ENCODE measurements at regions of chr16 and their contacts with region 1.

Region 1: DNA sequence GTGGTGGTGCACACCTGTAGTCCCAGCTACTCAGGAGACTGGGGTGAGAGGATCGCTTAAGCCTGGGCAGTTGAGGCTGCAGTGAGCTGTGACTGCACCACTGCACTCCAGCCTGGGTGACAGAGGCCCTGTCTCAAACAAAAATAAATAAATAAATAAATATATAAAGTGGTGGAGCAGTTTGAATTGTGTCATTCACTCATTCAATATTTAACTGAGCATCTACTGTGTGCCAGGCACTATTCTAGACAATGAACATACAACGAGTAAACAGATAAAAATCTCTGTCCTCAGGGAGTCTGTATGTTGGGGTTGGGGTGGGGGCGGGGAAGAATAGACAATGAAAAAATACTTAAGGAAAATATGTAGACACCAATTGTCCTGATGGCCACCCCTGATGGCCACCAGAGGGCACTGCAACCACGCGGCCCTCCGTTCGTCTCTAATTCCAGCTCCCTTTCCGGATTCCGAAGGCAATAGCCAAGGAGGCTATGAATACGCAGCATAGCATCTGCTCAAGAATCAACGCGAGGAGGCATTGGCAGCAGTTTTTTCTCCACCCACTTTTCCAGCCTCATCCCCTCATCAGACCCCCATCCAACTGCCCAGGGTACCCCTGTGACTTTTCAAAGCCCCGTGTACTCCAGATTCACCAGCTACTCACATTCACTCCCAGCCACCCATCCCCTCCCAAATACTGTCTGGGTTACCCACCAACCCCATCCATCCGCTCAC is 21.4 kb downstream of the QPRT start:
- DNase-seq: peak; percentile 83
- H3K4me3 ChIP-seq: no peak overlapping the region
- H3K27ac ChIP-seq: no peak overlapping the region
- H3K4me1 ChIP-seq: no peaks in the 10 kb centered on the region
- H3K27me3 ChIP-seq: no peaks in the 10 kb centered on the region
- CTCF ChIP-seq: peak; percentile 86

Region 2: GRCh38 chr16:29891525-29892457 is 191.4 kb after region 1 on chr16:
- intact Hi-C with region 1: no loop called
- DNase-seq: no peak
- H3K4me3 ChIP-seq: no peak overlapping the region
- H3K27ac ChIP-seq: no peak overlapping the region
- H3K4me1 ChIP-seq: no peaks in the 10 kb centered on the region
- H3K27me3 ChIP-seq: no peaks in the 10 kb centered on the region
- CTCF ChIP-seq: no peak

Region 3: DNA sequence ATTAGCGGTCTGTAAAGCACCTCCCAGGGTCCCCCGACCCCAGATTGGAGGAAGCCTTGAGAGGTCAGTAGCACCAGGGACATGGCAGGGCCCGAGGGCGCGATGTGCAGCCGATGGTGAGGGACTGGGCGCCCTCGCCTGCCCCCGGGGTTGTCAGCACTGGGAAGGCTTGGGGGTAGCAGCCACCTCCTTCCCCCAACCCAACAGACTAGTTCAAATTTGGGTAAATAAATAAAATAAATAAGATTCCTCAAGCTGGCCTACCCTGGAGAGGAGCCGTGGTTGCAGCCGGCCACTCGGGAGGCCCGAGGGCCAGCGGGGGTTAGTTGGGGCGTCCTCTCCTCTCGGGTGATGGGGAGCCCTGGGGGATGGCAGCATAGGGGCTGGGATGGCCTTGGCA is 324.0 kb after region 1 on chr16:
- intact Hi-C with region 1: loop called (anchors 5 kb)
- DNase-seq: no peak
- H3K4me3 ChIP-seq: no peak overlapping the region
- H3K27ac ChIP-seq: no peak overlapping the region
- H3K4me1 ChIP-seq: no peaks in the 10 kb centered on the region
- H3K27me3 ChIP-seq: peaks cover 3% of the 10 kb centered on the region
- CTCF ChIP-seq: no peak